Activated CD4-positive, alpha-beta memory T cell treated with anti-CD3 and anti-CD28 coated beads, Interleukin-2, amount 10 ng/mL, durations not matched to agents 7 days and 5 days (primary cell): ENCODE measurements at regions of chr1 and their contacts with region 1.

Region 1: GRCh38 chr1:65254319-65255034 is 54.9 kb upstream of the DNAJC6 start:
- DNase-seq: peak; percentile 89
- H3K4me3 Mint-ChIP-seq: peak overlapping the region; percentile 85
- H3K27ac Mint-ChIP-seq: no peak overlapping the region
- H3K4me1 Mint-ChIP-seq: peaks cover 28% of the 10 kb centered on the region
- H3K27me3 Mint-ChIP-seq: peaks cover 3% of the 10 kb centered on the region

Region 2: DNA sequence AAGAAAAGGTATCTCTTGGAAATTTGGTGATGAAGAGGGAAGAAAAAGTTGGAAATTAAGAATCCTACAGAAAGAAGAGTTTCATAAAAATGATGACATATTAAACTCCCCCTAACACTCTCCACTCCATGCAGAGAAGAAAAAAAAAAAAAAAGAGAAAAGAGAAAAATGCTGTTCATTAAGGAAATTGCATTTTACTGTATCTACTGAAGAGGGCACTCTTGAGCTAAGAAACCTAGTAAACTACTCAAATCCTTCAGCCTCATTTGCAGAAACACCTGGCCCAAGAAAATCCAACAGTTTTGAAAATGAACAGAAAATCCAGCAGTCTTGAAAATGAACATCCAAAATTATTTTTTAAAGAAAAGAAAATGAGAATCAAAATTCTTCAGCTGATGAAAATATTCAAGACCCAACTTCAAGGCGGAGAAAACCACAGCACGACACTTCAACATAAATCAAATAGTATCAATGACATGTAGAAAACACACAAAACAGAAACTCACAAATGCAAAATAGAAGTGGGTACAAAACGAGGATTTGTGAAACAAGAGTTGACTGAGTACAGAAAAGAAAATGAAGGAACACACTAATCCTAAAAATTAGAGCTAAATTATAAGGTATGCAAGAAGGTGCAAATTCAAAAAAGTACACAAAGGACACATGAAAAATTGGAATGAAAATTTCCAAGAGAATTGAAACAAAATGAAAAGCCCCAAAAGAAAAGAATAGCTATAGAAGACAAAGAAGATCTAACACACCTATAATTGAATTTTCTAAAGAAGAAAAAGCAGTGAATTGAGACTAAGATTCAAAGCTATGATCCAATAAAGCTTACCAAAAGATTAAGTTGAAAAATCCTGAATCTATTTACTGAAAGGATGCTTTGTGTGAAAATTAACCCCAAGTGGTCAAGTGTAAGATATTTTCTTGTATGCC is 18.3 kb before region 1 on chr1:
- CTCF ChIA-PET with region 1: interaction called, 14 read pairs
- POLR2A ChIA-PET with region 1: interaction called, 5 read pairs
- DNase-seq: no peak
- H3K4me3 Mint-ChIP-seq: no peak overlapping the region
- H3K27ac Mint-ChIP-seq: no peak overlapping the region
- H3K4me1 Mint-ChIP-seq: peaks cover 13% of the 10 kb centered on the region
- H3K27me3 Mint-ChIP-seq: peaks cover 11% of the 10 kb centered on the region